HCT116 (cell line): ENCODE measurements at regions of chr6 and their contacts with region 1.

Region 1: GRCh38 chr6:157045831-157046454 is 268.8 kb downstream of the ARID1B start:
- DNase-seq: peak; percentile 41
- ATAC-seq: peak; percentile 81
- H3K4me3 ChIP-seq: no peak overlapping the region
- H3K27ac ChIP-seq: no peak overlapping the region
- H3K4me1 ChIP-seq: peaks cover 0 to 3% of the 10 kb centered on the region in 2 experiments; a peak in 1 of 4 replicates
- H3K27me3 ChIP-seq: no peaks in the 10 kb centered on the region
- CTCF ChIP-seq: peak; percentile 55 to 67 (median 67)
- POLR2A ChIP-seq: no peak
- RAD21 ChIP-seq: peak; percentile 60

Region 2: GRCh38 chr6:157034436-157035230 is 11.3 kb before region 1 on chr6:
- CTCF ChIA-PET with region 1: interaction called, 24 read pairs
- POLR2A ChIA-PET with region 1: no interaction called
- RAD21 ChIA-PET with region 1: no interaction called
- intact Hi-C with region 1: no loop called
- DNase-seq: peak; percentile 36
- ATAC-seq: peak; percentile 73
- H3K4me3 ChIP-seq: no peak overlapping the region
- H3K27ac ChIP-seq: no peak overlapping the region
- H3K4me1 ChIP-seq: 0 out of 4 replicates have a peak, but pooled peaks cover 0 to 3% of the 10 kb centered on the region in 2 experiments
- H3K27me3 ChIP-seq: no peaks in the 10 kb centered on the region
- CTCF ChIP-seq: peak; percentile 60 to 61 (median 61); a peak in 5 of 6 replicates
- POLR2A ChIP-seq: no peak
- RAD21 ChIP-seq: peak; percentile 70